B cell (primary cell): ENCODE measurements at regions of chr14 and their contacts with region 1.

Region 1: DNA sequence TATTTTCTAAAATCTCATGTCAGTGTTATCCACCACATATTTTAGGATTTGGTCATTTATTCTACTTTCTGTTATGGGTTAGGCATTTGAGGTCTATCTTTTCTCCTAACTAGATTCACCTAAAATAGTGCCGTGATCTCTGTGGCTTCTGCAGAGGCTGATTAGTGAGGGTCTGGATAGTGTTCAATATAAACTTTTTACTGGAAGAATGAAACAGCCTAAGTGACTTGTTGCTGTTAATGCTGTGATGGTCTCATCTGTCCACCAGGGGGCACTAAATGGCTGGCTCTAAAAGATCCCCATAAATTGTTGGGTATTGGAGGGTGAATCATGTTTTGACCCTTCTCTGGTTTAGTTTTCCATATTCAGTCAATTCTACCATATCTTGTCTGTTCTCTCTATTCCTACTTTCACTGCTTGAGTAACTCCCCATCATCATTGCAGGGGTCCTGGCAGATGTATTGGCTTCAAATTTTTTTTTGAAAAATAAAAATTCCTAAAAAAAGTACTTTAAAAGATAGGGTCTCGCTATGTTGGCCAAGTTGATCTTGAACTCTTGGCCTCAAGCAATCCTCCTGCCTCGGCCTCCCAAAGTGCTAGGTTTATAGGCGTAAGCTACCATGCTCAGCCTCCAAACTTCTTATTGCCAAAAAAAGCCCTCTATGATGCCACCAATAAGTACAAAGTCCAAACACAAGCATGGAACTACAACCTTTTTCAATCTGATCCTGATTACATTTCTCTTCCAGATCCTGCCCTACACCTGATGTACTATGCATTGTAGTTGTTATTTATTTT is 6.9 kb downstream of the PABPN1 start:
- DNase-seq: peak; percentile 77
- ATAC-seq: peak; percentile 80
- H3K4me3 ChIP-seq: no peak overlapping the region
- H3K4me3 Mint-ChIP-seq: no peak overlapping the region
- H3K27ac ChIP-seq: no peak overlapping the region
- H3K27ac Mint-ChIP-seq: peak overlapping the region; percentile 2
- H3K4me1 ChIP-seq: peaks cover 1% of the 10 kb centered on the region in 2 donors
- H3K4me1 Mint-ChIP-seq: peaks cover 7% of the 10 kb centered on the region
- H3K27me3 ChIP-seq: peaks cover 0 to 2% (median 0%) of the 10 kb centered on the region in 4 experiments
- H3K27me3 Mint-ChIP-seq: peaks cover 3% of the 10 kb centered on the region
- CTCF ChIP-seq: peak; percentile 95

Region 2: GRCh38 chr14:23269193-23269592 is 59.0 kb before region 1 on chr14:
- CTCF ChIA-PET with region 1: interaction called, 5 read pairs
- POLR2A ChIA-PET with region 1: no interaction called
- intact Hi-C with region 1: loop called (anchors 1 kb)
- DNase-seq: no peak
- ATAC-seq: no peak
- H3K4me3 ChIP-seq: no peak overlapping the region
- H3K4me3 Mint-ChIP-seq: no peak overlapping the region
- H3K27ac ChIP-seq: no peak overlapping the region
- H3K27ac Mint-ChIP-seq: no peak overlapping the region
- H3K4me1 ChIP-seq: no peaks in the 10 kb centered on the region
- H3K4me1 Mint-ChIP-seq: no peaks in the 10 kb centered on the region
- H3K27me3 ChIP-seq: no peaks in the 10 kb centered on the region
- H3K27me3 Mint-ChIP-seq: peaks cover 13% of the 10 kb centered on the region
- CTCF ChIP-seq: no peak

Region 3: GRCh38 chr14:23751616-23752015 is 423.5 kb after region 1 on chr14:
- CTCF ChIA-PET with region 1: no interaction called
- POLR2A ChIA-PET with region 1: no interaction called
- intact Hi-C with region 1: no loop called
- DNase-seq: no peak
- ATAC-seq: no peak
- H3K4me3 ChIP-seq: no peak overlapping the region
- H3K4me3 Mint-ChIP-seq: no peak overlapping the region
- H3K27ac ChIP-seq: no peak overlapping the region
- H3K27ac Mint-ChIP-seq: no peak overlapping the region
- H3K4me1 ChIP-seq: no peaks in the 10 kb centered on the region
- H3K4me1 Mint-ChIP-seq: no peaks in the 10 kb centered on the region
- H3K27me3 ChIP-seq: no peaks in the 10 kb centered on the region
- H3K27me3 Mint-ChIP-seq: peaks cover 29% of the 10 kb centered on the region
- CTCF ChIP-seq: no peak